ENCODE measurements at regions of chr2 and their contacts with region 1.

Region 1: GRCh38 chr2:185433824-185434223 is 304.8 kb upstream of the FSIP2 start:
- DNase-seq: no peak
- ATAC-seq: no peak; the same call in 1 of the 2 replicates
- H3K4me3 ChIP-seq: no peak overlapping the region
- H3K27ac ChIP-seq: no peak overlapping the region
- H3K4me1 ChIP-seq: no peaks in the 10 kb centered on the region; the same call in 1 of the 2 replicates
- H3K27me3 ChIP-seq: no peaks in the 10 kb centered on the region
- CTCF ChIP-seq: no peak

Region 2: DNA sequence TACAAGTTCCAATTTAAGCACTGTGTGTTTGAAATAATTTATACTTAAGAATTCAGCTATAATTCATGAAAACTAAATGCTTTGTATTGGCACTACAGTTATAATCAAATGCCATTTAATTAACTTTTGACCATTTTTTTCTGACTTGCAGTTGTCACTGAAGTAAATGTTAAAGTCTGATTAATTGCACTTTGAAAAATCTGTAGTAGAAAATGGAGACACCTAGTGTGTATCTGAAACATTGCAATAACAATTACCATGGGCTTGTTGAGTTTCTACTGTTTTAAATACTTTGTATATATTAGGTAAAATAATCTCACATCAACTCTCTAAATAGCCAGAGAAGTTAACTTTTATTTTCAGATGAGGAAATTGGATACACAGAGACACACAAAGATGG is 153.8 kb before region 1 on chr2:
- CTCF ChIA-PET with region 1: no interaction called
- POLR2A ChIA-PET with region 1: no interaction called
- intact Hi-C with region 1: no loop called
- DNase-seq: peak; percentile 57
- ATAC-seq: no peak
- H3K4me3 ChIP-seq: no peak overlapping the region
- H3K27ac ChIP-seq: no peak overlapping the region
- H3K4me1 ChIP-seq: 0 out of 2 replicates have a peak, but pooled peaks cover 4% of the 10 kb centered on the region
- H3K27me3 ChIP-seq: no peaks in the 10 kb centered on the region
- CTCF ChIP-seq: peak; percentile 78

Region 3: GRCh38 chr2:185583062-185583816 is 149.4 kb after region 1 on chr2:
- CTCF ChIA-PET with region 1: no interaction called
- POLR2A ChIA-PET with region 1: no interaction called
- intact Hi-C with region 1: loop called (anchors 10 kb)
- DNase-seq: peak; percentile 97
- ATAC-seq: peak; percentile 97
- H3K4me3 ChIP-seq: no peak overlapping the region
- H3K27ac ChIP-seq: peak overlapping the region; percentile 84
- H3K4me1 ChIP-seq: peaks cover 22% of the 10 kb centered on the region
- H3K27me3 ChIP-seq: no peaks in the 10 kb centered on the region
- CTCF ChIP-seq: no peak